Activated T-helper 1 cell treated with anti-CD3 and anti-CD28 coated beads, Interleukin-12 subunit alpha, Interleukin-12 subunit beta, Interleukin-2, Interleukin-4 antibody, amounts not matched to agents 30 ng/mL and 10 ng/mL and 1 ng/mL, durations not matched to agents 14 hours and 24 hours and 36 hours (primary cell): ENCODE measurements at regions of chr14 and their contacts with region 1.

Region 1: GRCh38 chr14:75497191-75497590 is 25.1 kb upstream of the BATF start:
- DNase-seq: peak; percentile 58
- H3K4me3 Mint-ChIP-seq: peak overlapping the region; percentile 66
- H3K27ac Mint-ChIP-seq: peak overlapping the region; percentile 89
- H3K4me1 Mint-ChIP-seq: peaks cover 61% of the 10 kb centered on the region
- H3K27me3 Mint-ChIP-seq: no peaks in the 10 kb centered on the region

Region 2: DNA sequence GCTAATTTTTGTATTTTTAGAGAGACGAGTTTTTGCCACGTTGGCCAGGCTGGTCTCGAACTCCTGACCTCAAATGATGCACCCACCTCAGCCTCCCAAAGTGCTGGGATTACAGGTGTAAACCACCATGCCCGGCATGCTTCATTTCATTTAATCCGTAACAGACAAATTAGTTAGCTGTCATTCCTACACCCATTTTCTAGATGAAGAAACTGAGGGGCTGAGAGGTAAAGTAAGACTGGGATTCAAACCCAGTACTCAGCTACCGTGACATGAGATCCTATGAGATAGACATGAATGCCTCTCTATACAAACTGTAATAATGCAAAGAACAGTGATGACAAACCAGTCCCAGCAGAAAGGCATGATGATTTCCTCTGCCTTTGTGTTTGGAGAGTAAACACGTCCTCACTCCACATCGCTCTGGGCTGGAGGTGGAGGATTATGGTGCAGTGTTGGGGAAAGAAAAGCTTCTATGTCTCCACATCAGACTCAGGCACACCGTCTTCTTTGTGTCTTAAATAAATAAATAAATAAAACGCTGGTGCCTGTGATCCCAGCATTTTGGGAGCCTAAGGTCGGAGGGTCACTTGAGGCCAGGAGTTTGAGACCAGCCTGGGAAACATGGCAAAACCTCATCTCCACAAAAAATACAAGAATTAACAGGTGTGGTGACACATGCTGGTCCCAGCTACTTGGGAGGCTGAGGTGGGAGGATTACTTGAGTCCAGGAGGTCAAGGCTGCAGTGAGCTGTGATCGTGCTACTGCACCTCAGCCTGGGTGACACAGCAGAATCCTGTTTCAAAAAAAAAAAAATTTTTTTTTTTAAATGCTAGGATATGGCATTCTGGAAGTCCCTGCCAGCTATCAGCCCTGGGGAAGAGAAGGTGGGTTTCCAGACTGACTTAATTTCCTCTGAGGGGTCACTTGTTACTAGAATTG is 1247.5 kb before region 1 on chr14:
- intact Hi-C with region 1: no loop called
- DNase-seq: no peak
- H3K4me3 Mint-ChIP-seq: no peak overlapping the region
- H3K27ac Mint-ChIP-seq: no peak overlapping the region
- H3K4me1 Mint-ChIP-seq: peaks cover 7% of the 10 kb centered on the region
- H3K27me3 Mint-ChIP-seq: peaks cover 43% of the 10 kb centered on the region

Region 3: DNA sequence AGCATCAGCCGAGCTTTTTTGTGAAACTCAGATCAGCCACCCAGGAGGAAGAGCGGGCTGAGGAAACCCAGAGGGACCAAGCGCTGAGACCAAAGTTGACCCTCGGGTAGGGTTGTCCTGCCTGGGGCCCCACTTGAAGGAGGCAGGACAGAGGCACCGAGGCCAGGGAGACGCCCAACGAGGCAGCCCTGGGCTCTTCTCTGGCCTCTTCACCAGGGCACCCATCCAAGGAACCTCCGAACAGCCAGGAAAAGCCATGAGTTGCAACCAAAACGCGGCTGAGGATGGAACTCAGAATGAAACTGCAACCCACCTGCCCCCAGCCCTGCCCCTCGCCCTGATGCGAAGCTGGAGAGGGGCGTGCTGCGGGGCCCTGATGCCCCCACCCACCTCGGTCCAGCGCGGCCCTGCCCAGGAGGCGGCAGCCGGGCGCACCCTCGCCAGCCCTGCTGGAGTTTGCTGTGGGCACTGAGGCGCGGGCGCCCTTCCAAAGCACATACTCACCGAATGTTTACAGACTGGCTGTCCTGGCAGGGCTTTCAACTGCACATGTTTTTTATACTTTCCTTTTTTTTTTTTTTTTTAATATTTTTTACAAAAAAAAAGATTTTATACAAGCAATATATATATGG is 27.5 kb before region 1 on chr14:
- intact Hi-C with region 1: no loop called
- DNase-seq: no peak
- H3K4me3 Mint-ChIP-seq: no peak overlapping the region
- H3K27ac Mint-ChIP-seq: no peak overlapping the region
- H3K4me1 Mint-ChIP-seq: peaks cover 12% of the 10 kb centered on the region
- H3K27me3 Mint-ChIP-seq: no peaks in the 10 kb centered on the region

Region 4: DNA sequence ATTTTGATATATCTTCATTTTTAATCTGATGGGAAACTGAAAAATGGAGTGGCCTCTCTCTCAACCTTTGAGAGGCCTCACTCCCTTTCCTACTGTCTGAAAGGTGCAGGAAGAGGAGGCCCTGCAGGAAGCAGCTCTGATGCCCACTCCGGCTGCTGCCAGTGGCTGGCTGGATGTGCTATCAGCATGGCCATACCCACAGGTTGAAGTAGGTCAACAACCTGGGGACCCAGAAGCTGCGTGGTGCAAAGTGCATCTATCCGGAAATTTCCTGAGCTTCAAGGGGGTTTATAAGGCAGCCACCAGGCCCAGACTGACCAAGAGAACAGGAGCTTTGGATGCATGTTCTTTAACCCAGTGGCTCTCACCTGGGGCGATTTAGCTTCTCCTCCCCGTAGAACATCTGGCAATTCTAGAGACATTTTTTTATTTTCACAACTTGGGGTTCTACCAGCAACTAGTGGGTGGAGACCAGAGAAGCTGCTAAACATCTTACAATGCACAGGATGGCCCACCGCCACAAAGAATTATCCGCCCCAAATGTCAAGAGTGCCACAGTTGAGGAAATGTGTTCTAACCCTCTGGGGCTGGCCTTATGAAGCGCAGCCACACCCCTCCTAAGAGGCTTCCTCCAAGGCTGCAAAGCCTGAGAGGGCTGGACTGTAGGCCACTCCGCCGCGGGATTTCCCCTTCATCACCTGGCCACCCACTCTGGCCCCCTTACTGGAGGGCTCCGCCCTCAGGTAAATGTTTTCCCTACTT is 16.9 kb after region 1 on chr14:
- intact Hi-C with region 1: loop called (anchors 1 kb)
- DNase-seq: no peak
- H3K4me3 Mint-ChIP-seq: no peak overlapping the region
- H3K27ac Mint-ChIP-seq: no peak overlapping the region
- H3K4me1 Mint-ChIP-seq: peaks cover 47% of the 10 kb centered on the region
- H3K27me3 Mint-ChIP-seq: no peaks in the 10 kb centered on the region

Region 5: DNA sequence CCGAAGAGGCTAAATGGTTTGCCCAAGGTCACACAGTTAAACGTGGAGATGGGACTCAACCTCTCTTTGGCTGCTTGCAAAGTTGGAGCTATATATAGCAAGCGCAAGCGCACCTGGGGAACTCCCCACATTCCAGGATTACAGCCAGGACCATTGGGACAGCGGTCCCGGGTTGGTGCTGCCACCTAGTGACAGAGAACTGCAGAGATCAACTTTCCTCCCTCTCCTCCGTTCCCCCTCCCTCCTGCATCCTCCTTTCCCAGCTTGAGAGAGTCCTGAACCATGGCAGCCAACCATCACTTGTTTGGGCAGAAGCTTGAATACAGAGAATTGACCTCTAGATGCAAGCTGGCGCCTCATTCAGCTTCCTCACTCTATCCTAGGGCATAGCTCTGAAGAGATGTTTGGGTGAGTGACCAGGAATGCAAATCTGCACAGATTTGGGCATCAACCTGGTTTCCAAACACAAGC is 63.8 kb after region 1 on chr14:
- intact Hi-C with region 1: loop called (anchors 1 kb)
- DNase-seq: no peak
- H3K4me3 Mint-ChIP-seq: peak overlapping the region; percentile 15
- H3K27ac Mint-ChIP-seq: peak overlapping the region; percentile 93
- H3K4me1 Mint-ChIP-seq: peaks cover 68% of the 10 kb centered on the region
- H3K27me3 Mint-ChIP-seq: no peaks in the 10 kb centered on the region

Region 6: DNA sequence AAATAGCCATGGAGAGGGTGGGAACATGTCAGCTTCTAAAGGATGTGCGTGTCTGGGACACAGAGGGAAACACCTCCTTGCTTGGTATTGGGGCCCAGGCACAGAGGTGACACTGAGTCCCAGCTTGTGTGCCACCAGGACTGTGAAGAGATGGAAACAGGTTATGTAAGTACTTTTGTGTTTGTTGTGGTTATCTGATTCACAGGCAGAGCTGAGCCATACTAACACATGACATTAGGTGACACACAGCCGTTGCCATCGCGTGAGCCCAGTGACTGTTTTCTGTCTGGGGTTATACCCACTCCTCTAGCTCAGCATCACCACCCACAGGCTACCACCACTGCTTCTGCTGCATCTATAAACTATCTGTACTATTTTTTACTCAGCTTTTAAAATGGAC is 69.1 kb after region 1 on chr14:
- intact Hi-C with region 1: loop called (anchors 1 kb)
- DNase-seq: peak; percentile 68
- H3K4me3 Mint-ChIP-seq: peak overlapping the region; percentile 66
- H3K27ac Mint-ChIP-seq: peak overlapping the region; percentile 87
- H3K4me1 Mint-ChIP-seq: peaks cover 76% of the 10 kb centered on the region
- H3K27me3 Mint-ChIP-seq: no peaks in the 10 kb centered on the region

Region 7: DNA sequence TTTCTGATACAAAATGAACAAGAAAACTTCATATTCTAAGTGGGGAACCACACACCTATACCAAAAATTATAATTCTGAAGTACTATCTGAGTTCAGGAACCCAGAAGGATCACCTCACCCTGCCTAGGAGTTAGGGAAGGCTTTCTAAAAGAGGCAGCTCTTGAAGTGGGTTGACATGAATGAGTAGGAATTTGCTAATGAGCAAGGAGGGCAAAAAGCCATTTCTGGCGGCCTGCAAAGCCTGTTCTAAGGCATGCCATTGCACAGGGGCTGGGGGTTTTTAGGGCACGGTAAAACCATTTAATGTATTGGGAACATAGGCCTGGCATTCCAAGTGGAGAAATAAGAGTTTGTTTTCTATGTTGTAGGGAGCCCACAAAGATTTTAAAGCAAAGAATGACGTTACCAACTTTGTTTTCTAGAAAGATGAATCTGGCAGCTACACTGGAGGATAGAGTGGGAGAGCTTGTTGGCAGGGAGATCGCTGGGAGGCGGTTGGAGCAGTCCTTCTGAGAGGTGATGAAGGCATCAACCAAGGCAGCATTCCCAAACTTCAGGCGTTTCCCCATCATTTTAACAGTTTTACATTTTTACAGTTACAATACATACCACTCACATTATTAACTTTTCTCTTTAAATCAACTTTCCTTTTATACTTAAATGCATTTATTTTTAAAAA is 502.5 kb after region 1 on chr14:
- intact Hi-C with region 1: no loop called
- DNase-seq: no peak
- H3K4me3 Mint-ChIP-seq: no peak overlapping the region
- H3K27ac Mint-ChIP-seq: no peak overlapping the region
- H3K4me1 Mint-ChIP-seq: no peaks in the 10 kb centered on the region
- H3K27me3 Mint-ChIP-seq: no peaks in the 10 kb centered on the region